A549 (cell line): ENCODE measurements at regions of chr19 and their contacts with region 1.

Region 1: DNA sequence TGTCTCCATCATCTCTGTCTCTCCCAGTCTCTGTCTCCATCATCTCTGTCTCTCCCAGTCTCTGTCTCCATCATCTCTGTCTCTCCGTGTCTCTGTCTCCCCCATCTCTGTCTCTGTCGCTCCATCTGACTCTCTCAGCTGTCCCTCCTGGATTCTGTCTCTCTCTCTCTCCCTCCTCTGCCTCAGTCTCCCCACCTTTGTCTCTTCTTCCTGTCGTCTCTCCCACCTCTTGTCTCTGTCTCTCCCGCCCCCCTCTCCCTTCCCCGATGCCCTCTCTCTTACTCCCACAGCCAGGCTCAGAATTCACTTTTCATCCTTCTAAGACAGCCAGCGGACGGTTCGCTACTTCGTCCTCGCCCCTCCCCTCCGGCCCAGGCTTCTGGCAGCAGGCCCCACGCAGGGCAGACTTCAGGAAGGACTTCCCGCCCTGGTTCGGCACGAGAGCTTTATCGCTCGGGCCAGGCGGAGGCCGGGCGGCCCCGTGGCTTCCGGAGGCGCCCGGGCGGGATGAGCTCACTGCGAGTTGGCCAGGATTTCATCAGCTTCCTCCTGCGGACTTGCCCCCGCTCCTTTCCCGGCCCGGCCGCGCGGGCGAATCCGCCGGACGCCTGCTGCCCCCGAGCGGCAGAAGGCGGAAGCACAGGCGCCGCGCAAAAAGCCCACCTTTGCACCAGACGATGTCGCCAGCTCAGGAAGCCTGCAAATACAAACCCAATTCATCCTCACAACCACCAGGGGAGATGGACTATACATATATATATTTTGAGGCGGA is 12.4 kb upstream of the CCDC9 start:
- DNase-seq: peak; percentile 94 to 97
- ATAC-seq: peak; percentile 86 to 94
- H3K4me3 ChIP-seq: peak overlapping the region; percentile 49
- H3K27ac ChIP-seq: peak overlapping the region; percentile 82 to 98
- H3K4me1 ChIP-seq: peaks cover 33% of the 10 kb centered on the region
- CTCF ChIP-seq: peak; percentile 99
- EP300 ChIP-seq: peak; percentile 22 to 84; a peak in 3 of 5 replicates
- POLR2A ChIP-seq: no peak; the same call in 1 of the 2 replicates
- RAD21 ChIP-seq: peak; percentile 96 to 99

Region 2: GRCh38 chr19:47112997-47113849 is 130.7 kb before region 1 on chr19 and contains the start of gene ZC3H4:
- CTCF ChIA-PET with region 1: interaction called, 4 read pairs
- POLR2A ChIA-PET with region 1: interaction called, 23 read pairs
- DNase-seq: peak; percentile 99 to 100
- ATAC-seq: peak; percentile 81 to 92
- H3K4me3 ChIP-seq: peak within 1 kb of the TSS; percentile 98
- H3K27ac ChIP-seq: peak within 1 kb of the TSS; percentile 99
- H3K4me1 ChIP-seq: peaks cover 27% of the 10 kb centered on the region
- CTCF ChIP-seq: no peak
- EP300 ChIP-seq: no peak
- POLR2A ChIP-seq: peak; percentile 75
- RAD21 ChIP-seq: no peak
- polyA plus RNA-seq, gene ZC3H4: 7.7 and 9.6 TPM in 2 replicates

Region 3: GRCh38 chr19:47152224-47153017 is 91.5 kb before region 1 on chr19:
- CTCF ChIA-PET with region 1: interaction called, 364 read pairs
- POLR2A ChIA-PET with region 1: interaction called, 13 read pairs
- DNase-seq: no peak
- ATAC-seq: no peak
- H3K4me3 ChIP-seq: no peak overlapping the region
- H3K27ac ChIP-seq: no peak overlapping the region
- H3K4me1 ChIP-seq: peaks cover 7% of the 10 kb centered on the region; the same call in 2 of the 3 replicates
- CTCF ChIP-seq: no peak
- EP300 ChIP-seq: no peak
- POLR2A ChIP-seq: no peak
- RAD21 ChIP-seq: no peak

Region 4: DNA sequence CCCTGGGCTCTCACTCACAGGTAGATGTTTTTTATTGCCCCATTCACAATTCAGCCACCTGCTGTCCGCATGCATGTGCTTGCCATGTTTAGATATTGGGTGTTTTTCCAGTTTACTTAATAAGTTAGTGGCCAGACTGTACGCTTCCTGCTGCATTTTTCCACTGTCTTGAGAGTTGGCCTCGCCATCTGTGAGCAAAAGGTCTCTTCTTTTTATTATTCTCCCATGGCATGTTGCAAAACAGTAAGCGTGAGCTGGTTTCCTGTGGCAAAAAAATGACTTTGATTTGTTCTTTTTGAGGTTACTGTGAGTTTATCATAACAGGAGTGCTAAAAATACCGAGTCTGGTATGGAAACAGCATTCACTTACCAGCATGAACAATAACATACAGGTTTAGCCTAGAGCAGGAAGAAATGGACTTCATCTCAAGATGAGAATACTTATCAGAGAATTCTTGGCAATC is 67.3 kb before region 1 on chr19:
- CTCF ChIA-PET with region 1: interaction called, 16 read pairs
- POLR2A ChIA-PET with region 1: interaction called, 3 read pairs
- DNase-seq: no peak
- ATAC-seq: no peak
- H3K4me3 ChIP-seq: no peak overlapping the region
- H3K27ac ChIP-seq: no peak overlapping the region
- H3K4me1 ChIP-seq: peaks cover 11% of the 10 kb centered on the region; the same call in 2 of the 3 replicates
- CTCF ChIP-seq: no peak
- EP300 ChIP-seq: no peak
- POLR2A ChIP-seq: no peak
- RAD21 ChIP-seq: no peak

Region 5: DNA sequence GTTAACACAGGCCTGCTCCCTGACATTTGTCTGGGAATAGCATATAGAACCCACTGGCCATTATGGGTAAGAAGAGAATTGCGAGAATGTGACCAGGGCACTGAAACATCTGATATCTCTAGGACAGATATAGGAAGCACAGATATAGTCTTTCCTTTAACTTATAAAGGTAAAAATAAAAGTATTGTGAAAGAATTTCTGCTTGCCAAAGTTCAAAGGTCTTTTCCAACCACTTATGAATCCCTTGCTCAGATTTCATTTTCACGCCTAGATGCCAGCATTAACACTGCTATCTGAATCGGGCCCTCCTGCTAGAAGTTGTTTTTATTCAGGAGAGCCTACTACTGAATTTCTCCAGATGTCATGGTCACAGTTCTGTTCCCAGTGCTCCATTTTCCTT is 40.7 kb before region 1 on chr19:
- CTCF ChIA-PET with region 1: interaction called, 893 read pairs
- POLR2A ChIA-PET with region 1: interaction called, 5 read pairs
- DNase-seq: no peak
- ATAC-seq: no peak
- H3K4me3 ChIP-seq: no peak overlapping the region
- H3K27ac ChIP-seq: no peak overlapping the region
- H3K4me1 ChIP-seq: peaks cover 10% of the 10 kb centered on the region; the same call in 2 of the 3 replicates
- CTCF ChIP-seq: no peak
- EP300 ChIP-seq: no peak
- POLR2A ChIP-seq: no peak
- RAD21 ChIP-seq: no peak

Region 6: DNA sequence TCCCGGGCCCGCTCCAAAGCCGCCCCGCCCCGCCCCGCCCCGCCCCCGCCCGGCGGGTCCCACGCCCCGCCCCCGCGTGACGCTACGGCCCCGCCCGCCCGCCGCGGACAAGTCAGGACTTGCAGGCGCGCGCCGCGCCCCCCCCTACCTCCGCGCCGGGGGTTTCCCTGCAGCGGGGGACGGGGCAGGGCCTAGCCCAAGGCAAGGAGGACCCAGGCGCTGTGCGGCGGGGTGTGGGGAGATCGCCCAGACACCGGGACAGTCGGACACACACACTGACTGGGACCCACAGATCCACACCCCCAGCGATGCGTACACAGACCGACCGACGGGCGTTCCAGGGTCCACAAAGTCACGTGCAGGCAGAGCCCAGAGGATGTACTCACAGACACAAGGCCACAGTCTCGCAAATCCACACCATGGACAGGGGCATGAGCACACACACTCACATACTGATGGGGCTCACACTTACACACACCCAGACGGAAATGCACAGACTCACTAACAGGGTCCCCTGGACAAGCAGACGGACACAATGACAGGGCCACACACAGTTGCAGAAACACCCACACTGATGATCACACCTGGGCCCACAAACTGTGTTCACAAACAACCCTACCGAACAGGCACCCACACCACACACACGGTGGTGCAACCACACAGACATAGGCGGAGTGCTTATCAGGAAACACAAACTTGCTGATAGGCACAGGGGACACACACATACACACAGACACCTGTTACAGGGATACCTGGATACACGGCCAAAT is 12.6 kb before region 1 on chr19:
- CTCF ChIA-PET with region 1: interaction called, 893 read pairs
- POLR2A ChIA-PET with region 1: interaction called, 118 read pairs
- DNase-seq: peak; percentile 72 to 90
- ATAC-seq: peak; percentile 4 to 7
- H3K4me3 ChIP-seq: peak overlapping the region; percentile 89
- H3K27ac ChIP-seq: peak overlapping the region; percentile 87 to 98
- H3K4me1 ChIP-seq: peaks cover 45% of the 10 kb centered on the region
- CTCF ChIP-seq: no peak
- EP300 ChIP-seq: no peak
- POLR2A ChIP-seq: no peak
- RAD21 ChIP-seq: no peak

Region 7: DNA sequence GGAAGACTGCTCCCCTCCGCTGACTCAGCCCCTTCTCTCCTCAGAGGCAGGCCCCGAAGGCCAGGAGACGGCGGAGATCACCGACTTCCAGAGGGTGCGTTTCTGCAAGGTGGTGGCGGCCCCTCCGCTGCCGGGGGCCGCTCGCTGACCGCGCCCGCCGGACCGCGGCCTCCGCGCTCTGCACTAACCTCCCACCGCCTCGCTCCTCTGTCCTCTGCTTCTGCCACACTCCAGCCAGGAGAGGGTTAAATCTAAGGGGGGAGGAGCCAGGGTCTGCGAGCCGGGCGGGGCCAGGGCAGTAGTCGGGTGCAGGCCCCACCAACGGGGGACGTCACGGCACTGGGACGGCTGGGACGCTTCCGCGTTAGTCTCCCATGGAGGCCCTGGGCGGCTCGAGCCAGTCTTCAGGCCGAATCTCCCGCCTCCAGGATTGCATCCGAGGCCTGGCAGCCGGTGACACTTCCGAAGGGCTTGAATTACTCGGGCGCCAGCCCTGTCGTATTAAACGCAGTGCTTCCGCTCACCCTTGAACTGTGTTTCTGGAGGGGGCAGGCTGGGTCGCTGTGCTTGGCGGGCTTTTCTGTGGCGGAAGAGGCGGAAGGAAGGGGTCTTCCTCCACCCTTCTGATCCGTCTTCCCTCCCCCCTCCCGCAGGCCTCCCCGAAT is 29.5 kb after region 1 on chr19:
- CTCF ChIA-PET with region 1: interaction called, 32 read pairs
- POLR2A ChIA-PET with region 1: interaction called, 10 read pairs
- DNase-seq: peak; percentile 96
- ATAC-seq: peak; percentile 66 to 89
- H3K4me3 ChIP-seq: peak overlapping the region; percentile 59
- H3K27ac ChIP-seq: peak overlapping the region; percentile 80 to 90
- H3K4me1 ChIP-seq: peaks cover 15% of the 10 kb centered on the region
- CTCF ChIP-seq: no peak
- EP300 ChIP-seq: no peak
- POLR2A ChIP-seq: peak; percentile 41
- RAD21 ChIP-seq: no peak

Region 8: GRCh38 chr19:47406711-47407416 is 162.9 kb after region 1 on chr19:
- CTCF ChIA-PET with region 1: no interaction called
- POLR2A ChIA-PET with region 1: no interaction called
- DNase-seq: no peak
- ATAC-seq: peak; percentile 31 to 50; a peak in 5 of 6 replicates
- H3K4me3 ChIP-seq: no peak overlapping the region
- H3K27ac ChIP-seq: no peak overlapping the region
- H3K4me1 ChIP-seq: no peaks in the 10 kb centered on the region
- CTCF ChIP-seq: no peak
- EP300 ChIP-seq: no peak
- POLR2A ChIP-seq: no peak
- RAD21 ChIP-seq: no peak